Activated T-helper 2 cell treated with anti-CD3 and anti-CD28 coated beads, Interferon-gamma antibody, Interleukin-2, Interleukin-4, amounts not matched to agents 10 μg/mL and 5 μg/mL and 100 μg/mL, durations not matched to agents 14 hours and 24 hours and 36 hours (primary cell): ENCODE measurements at regions of chr2 and their contacts with region 1.

Region 1: GRCh38 chr2:65064728-65065552 is 8.7 kb downstream of the CEP68 start:
- DNase-seq: peak; percentile 38
- H3K4me3 Mint-ChIP-seq: no peak overlapping the region
- H3K27ac Mint-ChIP-seq: peak overlapping the region; percentile 69
- H3K4me1 Mint-ChIP-seq: peaks cover 21% of the 10 kb centered on the region
- H3K27me3 Mint-ChIP-seq: no peaks in the 10 kb centered on the region

Region 2: DNA sequence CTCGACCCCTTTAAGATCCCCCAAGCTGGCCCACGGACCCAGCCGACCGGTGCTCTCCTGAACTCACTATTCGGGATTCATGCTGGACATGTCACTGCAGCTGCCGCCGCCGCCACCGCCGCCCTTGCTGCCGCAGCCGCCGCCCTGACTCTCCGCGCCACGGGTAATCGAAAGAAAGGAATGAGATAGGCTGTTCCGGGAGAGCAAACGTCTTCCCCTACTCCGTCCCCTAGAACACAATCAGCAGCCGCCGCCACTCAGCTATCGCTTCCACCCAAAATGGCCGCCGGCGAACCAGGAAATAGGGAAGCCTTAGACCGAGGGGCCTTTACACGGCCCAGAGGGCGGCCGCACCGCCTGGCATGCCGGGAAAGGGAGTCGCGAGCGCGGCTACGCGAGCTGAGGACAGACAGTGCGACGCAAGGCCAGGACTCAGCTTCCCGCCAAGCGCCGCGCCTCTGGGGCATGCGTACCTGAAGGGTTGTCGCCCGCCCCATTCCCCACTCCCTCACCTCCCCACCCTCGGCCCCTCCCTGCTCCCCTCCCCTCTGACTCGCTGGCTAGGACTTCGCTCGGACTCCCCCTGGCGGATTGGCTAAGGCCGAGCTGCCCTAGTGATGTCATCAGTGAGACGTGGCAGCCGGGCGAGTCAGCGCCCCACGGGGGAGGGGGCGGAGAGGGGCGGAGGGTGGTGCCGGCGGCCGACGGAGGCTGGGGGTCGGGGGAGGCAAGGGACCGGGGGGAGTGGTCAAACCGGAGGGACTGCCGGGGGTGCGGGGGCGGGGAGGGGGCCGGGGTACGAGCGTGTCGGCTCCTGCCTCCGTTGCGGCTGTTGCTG is 65.1 kb after region 1 on chr2 and contains the start of gene RAB1A:
- intact Hi-C with region 1: loop called (anchors 2 kb)
- DNase-seq: peak; percentile 98
- H3K4me3 Mint-ChIP-seq: peak within 1 kb of the TSS; percentile 100
- H3K27ac Mint-ChIP-seq: peak within 1 kb of the TSS; percentile 100
- H3K4me1 Mint-ChIP-seq: peaks cover 35% of the 10 kb centered on the region
- H3K27me3 Mint-ChIP-seq: peaks cover 6% of the 10 kb centered on the region
- total RNA-seq, gene RAB1A: 88.1 and 96.6 TPM in 2 replicates

Region 3: DNA sequence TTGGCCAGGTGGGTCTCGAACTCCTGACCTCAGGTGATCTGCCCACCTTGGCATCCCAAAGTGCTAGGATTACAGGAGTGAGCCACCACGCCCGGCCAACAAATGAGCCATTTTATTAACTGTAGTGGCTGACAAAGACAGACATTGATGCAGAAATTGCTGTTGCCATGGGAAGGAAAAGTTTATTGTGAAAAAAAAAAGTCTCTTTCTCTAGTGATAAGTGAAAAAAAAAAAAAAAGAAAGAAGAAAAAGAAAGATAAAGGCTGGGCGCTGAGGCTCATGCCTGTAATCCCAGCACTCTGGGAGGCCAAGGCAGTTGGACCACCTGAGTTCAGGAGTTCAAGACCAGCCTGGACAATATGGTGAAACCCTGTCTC is 104.8 kb after region 1 on chr2:
- intact Hi-C with region 1: loop called (anchors 1 kb)
- DNase-seq: no peak
- H3K4me3 Mint-ChIP-seq: no peak overlapping the region
- H3K27ac Mint-ChIP-seq: no peak overlapping the region
- H3K4me1 Mint-ChIP-seq: no peaks in the 10 kb centered on the region
- H3K27me3 Mint-ChIP-seq: no peaks in the 10 kb centered on the region

Region 4: DNA sequence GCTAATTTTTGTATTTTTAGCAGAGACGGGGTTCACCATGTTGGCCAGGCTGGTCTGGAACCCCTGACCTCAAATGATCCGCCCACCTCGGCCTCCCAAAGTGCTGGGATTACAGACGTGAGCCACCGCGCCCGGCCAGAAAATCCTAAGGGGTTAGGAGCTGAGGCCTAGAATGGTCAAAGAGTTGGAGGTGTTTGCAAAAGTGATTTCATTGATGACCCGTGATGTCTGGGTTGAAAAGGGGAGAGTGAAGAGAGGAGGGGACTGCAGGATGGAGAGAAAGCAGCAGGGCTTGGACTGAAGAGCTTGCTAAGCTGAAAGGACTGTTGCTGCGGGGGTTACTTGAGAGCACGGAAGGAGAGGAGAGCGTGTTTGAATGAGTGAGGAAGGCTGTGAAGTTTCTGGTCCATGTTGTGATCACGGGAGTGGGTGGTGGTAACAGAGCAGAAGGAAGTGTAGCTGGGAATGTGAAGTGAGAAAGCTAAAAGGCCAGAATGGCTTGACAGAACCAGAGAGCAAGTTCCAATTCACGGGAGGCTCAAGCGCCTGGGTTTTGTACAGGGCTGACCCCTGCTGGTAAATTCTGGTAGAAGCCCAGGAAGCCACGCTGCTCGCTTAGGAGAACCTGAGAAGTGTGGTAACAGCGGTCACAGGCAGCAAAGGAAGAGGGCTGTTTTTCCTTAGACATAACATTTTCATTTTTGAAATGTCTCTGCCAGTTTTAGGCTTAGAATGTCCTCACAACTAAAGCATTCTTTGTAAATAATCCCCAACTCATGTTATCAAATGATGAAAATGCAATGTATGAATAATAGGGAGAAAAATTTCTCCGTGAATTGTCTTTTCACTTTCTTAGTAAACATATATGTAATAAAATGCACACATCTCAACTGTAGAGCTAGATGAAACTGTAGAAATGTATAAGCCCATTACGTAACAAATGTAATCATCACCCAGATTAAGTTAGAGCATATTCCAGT is 122.2 kb after region 1 on chr2:
- intact Hi-C with region 1: loop called (anchors 1 kb)
- DNase-seq: peak; percentile 52
- H3K4me3 Mint-ChIP-seq: no peak overlapping the region
- H3K27ac Mint-ChIP-seq: no peak overlapping the region
- H3K4me1 Mint-ChIP-seq: peaks cover 9% of the 10 kb centered on the region
- H3K27me3 Mint-ChIP-seq: peaks cover 19% of the 10 kb centered on the region

Region 5: GRCh38 chr2:65576861-65577601 is 512.1 kb after region 1 on chr2:
- intact Hi-C with region 1: loop called (anchors 5 kb)
- DNase-seq: no peak
- H3K4me3 Mint-ChIP-seq: no peak overlapping the region
- H3K27ac Mint-ChIP-seq: no peak overlapping the region
- H3K4me1 Mint-ChIP-seq: peaks cover 3% of the 10 kb centered on the region
- H3K27me3 Mint-ChIP-seq: peaks cover 21% of the 10 kb centered on the region

Region 6: DNA sequence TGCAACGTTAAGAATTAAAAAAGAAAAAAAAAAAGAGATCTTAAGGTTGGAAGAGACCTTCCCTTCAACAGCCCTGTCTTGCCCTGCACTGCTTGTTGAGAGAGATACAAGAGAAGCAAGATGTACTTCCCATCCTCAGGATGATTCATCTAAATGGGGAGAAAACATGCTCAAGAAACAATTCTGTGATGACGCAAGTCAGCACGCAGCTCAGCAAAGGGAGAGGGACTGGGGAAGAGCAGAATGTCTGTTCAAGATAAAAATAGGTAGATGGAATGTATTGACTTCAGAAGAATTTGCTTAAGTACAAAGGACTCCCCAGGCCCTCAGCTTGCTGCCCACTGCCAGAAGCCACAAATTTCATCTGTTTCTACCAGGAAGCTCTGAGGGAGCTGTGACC is 565.7 kb after region 1 on chr2:
- intact Hi-C with region 1: no loop called
- DNase-seq: no peak
- H3K4me3 Mint-ChIP-seq: no peak overlapping the region
- H3K27ac Mint-ChIP-seq: no peak overlapping the region
- H3K4me1 Mint-ChIP-seq: no peaks in the 10 kb centered on the region
- H3K27me3 Mint-ChIP-seq: peaks cover 12% of the 10 kb centered on the region